Ovary (tissue), 10 donors: ENCODE measurements at regions of chr6 and their contacts with region 1.

Region 1: GRCh38 chr6:52284460-52285176 is at the start of gene MCM3:
- DNase-seq: peak; percentile 94 to 98 (median 96)
- H3K4me3 ChIP-seq: peak within 1 kb of the TSS; percentile 80
- H3K27ac ChIP-seq: peak within 1 kb of the TSS in 1 of 2 donors; percentile 39
- H3K4me1 ChIP-seq: no peaks in the 10 kb centered on the region
- H3K27me3 ChIP-seq: no peaks in the 10 kb centered on the region
- CTCF ChIP-seq: peak in 2 of 3 donors; percentile 10 to 16
- EP300 ChIP-seq: no peak
- POLR2A ChIP-seq: no peak
- total RNA-seq, gene MCM3: 25.5 to 41.8 (median 37.1) TPM

Region 2: GRCh38 chr6:52399511-52400312 is 115.1 kb after region 1 on chr6:
- intact Hi-C with region 1: loop called in 3 of 4 experiments (anchors 5 to 10 kb)
- DNase-seq: peak in 3 of 5 donors; percentile 31 to 59 (median 47)
- H3K4me3 ChIP-seq: no peak overlapping the region
- H3K27ac ChIP-seq: no peak overlapping the region
- H3K4me1 ChIP-seq: no peaks in the 10 kb centered on the region
- H3K27me3 ChIP-seq: no peaks in the 10 kb centered on the region
- CTCF ChIP-seq: peak; percentile 64 to 86 (median 83)
- EP300 ChIP-seq: no peak
- POLR2A ChIP-seq: no peak